Activated CD8-positive, alpha-beta T cell treated with anti-CD3 and anti-CD28 coated beads, Interleukin-2, amount 10 ng/mL, durations not matched to agents 7 days and 5 days (primary cell): ENCODE measurements at regions of chr12 and their contacts with region 1.

Region 1: DNA sequence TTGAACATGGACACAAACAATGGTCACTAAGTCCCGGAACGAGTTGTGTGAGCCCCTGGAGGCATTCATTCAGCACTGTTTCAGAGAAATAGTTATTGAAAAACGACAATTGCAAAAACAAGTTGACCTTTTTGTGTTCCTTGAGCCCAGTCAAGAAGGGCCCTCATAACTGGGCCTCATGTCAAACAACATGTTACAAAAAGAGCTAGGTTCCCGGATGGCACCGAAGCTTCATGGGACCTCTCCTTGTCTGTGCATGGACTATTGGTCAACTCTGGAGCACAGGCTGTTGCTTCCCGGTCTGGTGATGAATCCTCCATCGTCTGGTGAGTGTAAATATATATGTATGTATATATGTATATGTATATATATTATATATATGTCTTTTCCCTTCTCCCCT is 176.6 kb downstream of the ALG10 start:
- DNase-seq: no peak
- ATAC-seq: no peak
- H3K4me3 Mint-ChIP-seq: no peak overlapping the region
- H3K27ac Mint-ChIP-seq: no peak overlapping the region
- H3K4me1 Mint-ChIP-seq: no peaks in the 10 kb centered on the region
- H3K27me3 Mint-ChIP-seq: no peaks in the 10 kb centered on the region

Region 2: DNA sequence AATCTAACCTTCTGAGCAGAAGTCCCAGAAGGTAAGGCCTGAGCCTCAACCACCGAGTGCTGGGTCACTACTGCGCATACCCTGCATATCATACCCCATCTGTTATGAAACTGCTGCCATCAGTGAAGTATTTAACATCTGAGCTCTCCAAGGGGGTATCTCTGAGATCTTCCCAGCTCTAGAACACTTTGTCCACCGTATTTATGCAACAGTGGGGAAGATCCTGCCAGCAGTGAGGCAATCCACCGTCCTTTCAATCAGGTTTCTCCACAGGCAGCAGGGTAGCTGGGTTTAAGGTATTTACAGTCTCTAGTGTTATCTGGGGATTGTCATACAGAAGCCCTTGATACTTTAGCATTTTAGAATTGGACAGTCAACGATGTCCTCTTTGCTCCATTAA is 76.7 kb before region 1 on chr12:
- CTCF ChIA-PET with region 1: interaction called, 11 read pairs
- POLR2A ChIA-PET with region 1: no interaction called
- DNase-seq: no peak
- ATAC-seq: no peak
- H3K4me3 Mint-ChIP-seq: no peak overlapping the region
- H3K27ac Mint-ChIP-seq: no peak overlapping the region
- H3K4me1 Mint-ChIP-seq: peaks cover 10% of the 10 kb centered on the region
- H3K27me3 Mint-ChIP-seq: no peaks in the 10 kb centered on the region